Activated CD4-positive, alpha-beta memory T cell treated with anti-CD3 and anti-CD28 coated beads for 36 hours (primary cell): ENCODE measurements at regions of chr12 and their contacts with region 1.

Region 1: GRCh38 chr12:12008931-12009611 is 61.7 kb upstream of the BCL2L14 start:
- DNase-seq: peak; percentile 86
- H3K4me3 Mint-ChIP-seq: peak overlapping the region; percentile 76
- H3K27ac Mint-ChIP-seq: peak overlapping the region; percentile 95
- H3K4me1 Mint-ChIP-seq: peaks cover 85% of the 10 kb centered on the region
- H3K27me3 Mint-ChIP-seq: no peaks in the 10 kb centered on the region

Region 2: GRCh38 chr12:11576104-11576503 is 433.0 kb before region 1 on chr12:
- CTCF ChIA-PET with region 1: interaction called, 11 read pairs
- POLR2A ChIA-PET with region 1: no interaction called
- intact Hi-C with region 1: loop called (anchors 1 kb)
- DNase-seq: peak; percentile 73
- H3K4me3 Mint-ChIP-seq: no peak overlapping the region
- H3K27ac Mint-ChIP-seq: no peak overlapping the region
- H3K4me1 Mint-ChIP-seq: peaks cover 24% of the 10 kb centered on the region
- H3K27me3 Mint-ChIP-seq: no peaks in the 10 kb centered on the region

Region 3: GRCh38 chr12:11738450-11738849 is 270.6 kb before region 1 on chr12:
- CTCF ChIA-PET with region 1: no interaction called
- POLR2A ChIA-PET with region 1: no interaction called
- intact Hi-C with region 1: no loop called
- DNase-seq: no peak
- H3K4me3 Mint-ChIP-seq: no peak overlapping the region
- H3K27ac Mint-ChIP-seq: no peak overlapping the region
- H3K4me1 Mint-ChIP-seq: peaks cover 55% of the 10 kb centered on the region
- H3K27me3 Mint-ChIP-seq: no peaks in the 10 kb centered on the region

Region 4: GRCh38 chr12:11765817-11766794 is 243.0 kb before region 1 on chr12:
- CTCF ChIA-PET with region 1: interaction called, 5 read pairs
- POLR2A ChIA-PET with region 1: interaction called, 20 read pairs
- intact Hi-C with region 1: loop called (anchors 1 kb)
- DNase-seq: peak; percentile 88
- H3K4me3 Mint-ChIP-seq: peak overlapping the region; percentile 28
- H3K27ac Mint-ChIP-seq: peak overlapping the region; percentile 84
- H3K4me1 Mint-ChIP-seq: peaks cover 99% of the 10 kb centered on the region
- H3K27me3 Mint-ChIP-seq: no peaks in the 10 kb centered on the region

Region 5: DNA sequence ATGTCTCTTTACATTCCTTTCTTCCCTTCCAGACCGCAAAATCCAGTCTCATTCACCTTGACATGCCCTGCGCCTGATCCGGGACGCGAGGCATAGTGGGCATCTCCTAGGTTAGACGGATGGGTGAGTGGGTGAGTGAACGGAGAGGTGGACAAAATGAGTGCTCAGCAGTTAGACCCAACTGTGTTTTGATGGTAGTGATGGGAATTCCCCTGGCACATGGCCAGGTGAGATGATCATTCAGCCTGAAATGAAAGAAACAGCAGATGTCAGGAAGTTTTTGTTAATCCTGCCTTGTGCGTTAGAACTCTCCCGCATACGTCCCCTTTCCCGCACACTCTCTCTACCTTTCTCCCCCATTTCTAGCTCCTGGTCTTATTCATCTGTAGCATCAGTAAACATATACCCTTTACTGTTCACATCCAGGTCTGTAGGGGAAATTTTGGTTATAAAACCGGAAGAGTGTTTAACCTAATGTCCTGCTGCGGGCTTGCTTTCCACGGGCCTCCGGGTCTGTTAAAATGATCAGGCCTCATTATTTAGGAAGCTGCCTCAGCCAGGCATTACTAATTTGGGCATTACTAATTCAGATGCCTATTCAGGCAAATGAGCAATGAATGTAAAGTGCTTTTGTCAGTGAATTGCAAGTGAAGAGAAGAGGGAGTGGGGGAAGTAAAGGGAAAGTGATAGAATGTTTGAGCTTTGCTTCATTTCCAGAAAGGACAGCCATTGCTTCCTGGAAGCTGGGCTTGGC is 186.8 kb before region 1 on chr12:
- CTCF ChIA-PET with region 1: interaction called, 3 read pairs
- POLR2A ChIA-PET with region 1: interaction called, 4 read pairs
- intact Hi-C with region 1: loop called (anchors 1 kb)
- DNase-seq: peak; percentile 83
- H3K4me3 Mint-ChIP-seq: peak overlapping the region; percentile 49
- H3K27ac Mint-ChIP-seq: peak overlapping the region; percentile 87
- H3K4me1 Mint-ChIP-seq: peaks cover 66% of the 10 kb centered on the region
- H3K27me3 Mint-ChIP-seq: no peaks in the 10 kb centered on the region

Region 6: GRCh38 chr12:11958221-11959091 is 50.6 kb before region 1 on chr12:
- CTCF ChIA-PET with region 1: interaction called, 4 read pairs
- POLR2A ChIA-PET with region 1: interaction called, 19 read pairs
- intact Hi-C with region 1: loop called (anchors 1 kb)
- DNase-seq: peak; percentile 80
- H3K4me3 Mint-ChIP-seq: peak overlapping the region; percentile 50
- H3K27ac Mint-ChIP-seq: peak overlapping the region; percentile 90
- H3K4me1 Mint-ChIP-seq: peaks cover 37% of the 10 kb centered on the region
- H3K27me3 Mint-ChIP-seq: no peaks in the 10 kb centered on the region

Region 7: GRCh38 chr12:12032851-12033588 is 23.9 kb after region 1 on chr12:
- CTCF ChIA-PET with region 1: interaction called, 77 read pairs
- POLR2A ChIA-PET with region 1: interaction called, 67 read pairs
- intact Hi-C with region 1: loop called (anchors 1 kb)
- DNase-seq: peak; percentile 81
- H3K4me3 Mint-ChIP-seq: peak overlapping the region; percentile 72
- H3K27ac Mint-ChIP-seq: peak overlapping the region; percentile 88
- H3K4me1 Mint-ChIP-seq: peaks cover 69% of the 10 kb centered on the region
- H3K27me3 Mint-ChIP-seq: peaks cover 1% of the 10 kb centered on the region